Activated CD4-positive, alpha-beta T cell treated with anti-CD3 and anti-CD28 coated beads, Interleukin-2, amount 10 ng/mL, durations not matched to agents 24 days and 14 days (primary cell): ENCODE measurements at regions of chr14 and their contacts with region 1.

Region 1: DNA sequence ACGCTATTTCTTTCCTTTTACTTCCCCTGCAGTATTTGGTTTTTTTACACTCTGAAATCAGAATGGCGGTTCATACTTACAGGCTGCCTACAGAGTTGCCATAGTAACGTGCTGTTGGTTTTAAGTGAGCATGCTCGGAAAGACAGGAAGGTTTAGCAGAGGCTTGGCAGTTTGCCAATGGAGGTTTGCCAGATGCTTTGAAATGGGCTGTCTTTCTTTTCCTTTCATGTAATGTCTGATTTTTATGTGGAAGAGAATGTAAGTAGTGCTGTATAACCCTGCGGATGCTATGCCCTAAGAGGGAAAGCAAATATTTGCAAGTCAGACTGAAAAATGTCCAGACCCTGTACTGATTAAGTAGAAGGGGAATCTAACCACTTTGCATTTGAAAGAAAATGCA is 32.8 kb downstream of the ARID4A start:
- DNase-seq: peak; percentile 96
- H3K4me3 Mint-ChIP-seq: peak overlapping the region; percentile 66
- H3K27ac Mint-ChIP-seq: peak overlapping the region; percentile 87
- H3K4me1 Mint-ChIP-seq: peaks cover 12% of the 10 kb centered on the region
- H3K27me3 Mint-ChIP-seq: no peaks in the 10 kb centered on the region

Region 2: GRCh38 chr14:58395812-58396788 is 65.0 kb after region 1 on chr14 and contains the start of gene TOMM20L:
- intact Hi-C with region 1: loop called (anchors 5 kb)
- DNase-seq: peak; percentile 94
- H3K4me3 Mint-ChIP-seq: peak within 1 kb of the TSS; percentile 76
- H3K27ac Mint-ChIP-seq: peak within 1 kb of the TSS; percentile 51
- H3K4me1 Mint-ChIP-seq: peaks cover 11% of the 10 kb centered on the region
- H3K27me3 Mint-ChIP-seq: peaks cover 2% of the 10 kb centered on the region
- total RNA-seq, gene TOMM20L: not detected in 2 replicates